HepG2 (cell line): ENCODE measurements at regions of chr17 and their contacts with region 1.

Region 1: GRCh38 chr17:79796763-79797491 is at the start of gene CBX8:
- DNase-seq: peak; percentile 99
- ATAC-seq: peak; percentile 69
- H3K4me3 ChIP-seq: peak within 1 kb of the TSS; percentile 85 to 94 (median 86)
- H3K27ac ChIP-seq: peak within 1 kb of the TSS; percentile 87
- H3K4me1 ChIP-seq: peaks cover 67% of the 10 kb centered on the region
- H3K27me3 ChIP-seq: peaks cover 28 to 49% of the 10 kb centered on the region in 2 experiments
- CTCF ChIP-seq: peak; percentile 72
- EP300 ChIP-seq: peak in 1 of 2 experiments; percentile 32; a peak in 2 of 4 replicates
- POLR2A ChIP-seq: peak; percentile 78 to 92
- RAD21 ChIP-seq: peak; percentile 74
- total RNA-seq, gene CBX8: 12.0 and 12.6 TPM in 2 replicates

Region 2: DNA sequence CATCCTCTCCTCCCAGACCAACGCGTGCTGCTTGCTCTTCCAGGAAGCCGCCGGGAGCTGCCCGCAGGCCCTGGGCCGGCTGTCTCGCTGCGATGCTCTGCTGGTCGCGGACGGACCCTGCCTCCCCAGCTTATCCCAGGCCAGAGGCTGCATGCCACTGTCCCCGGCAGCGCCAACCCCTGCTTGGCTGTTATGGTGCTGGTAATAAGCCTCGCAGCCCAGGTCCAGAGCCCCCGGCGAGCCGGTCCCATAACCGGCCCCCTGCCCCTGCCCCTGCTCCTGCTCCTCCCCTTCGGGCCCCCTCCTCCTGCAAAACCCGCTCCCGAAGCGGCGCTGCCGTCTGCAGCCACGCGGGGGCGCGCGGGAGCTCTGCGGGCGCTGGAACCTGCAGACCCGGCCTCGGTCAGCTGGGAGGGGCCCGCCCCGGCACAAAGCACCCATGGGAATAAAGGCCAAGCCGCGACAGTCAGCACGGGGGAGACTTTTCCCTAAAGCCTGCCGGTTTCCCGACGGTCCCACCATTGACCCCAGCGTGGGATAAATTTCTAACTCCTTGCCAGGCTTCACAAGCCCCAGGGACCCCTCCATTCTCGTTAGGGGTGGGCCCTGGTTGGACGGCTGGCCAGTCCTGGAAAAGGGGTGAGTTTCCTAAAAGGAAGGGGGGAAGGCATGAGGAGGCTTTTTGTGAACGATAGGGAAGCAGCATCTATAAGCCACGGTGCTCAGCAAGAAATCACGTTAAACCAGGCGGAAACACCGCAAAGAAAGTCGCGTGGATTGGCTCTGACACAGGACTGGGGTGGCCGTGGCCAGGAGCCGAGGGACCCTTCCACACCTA is 55.0 kb before region 1 on chr17:
- CTCF ChIA-PET with region 1: no interaction called
- POLR2A ChIA-PET with region 1: interaction called, 25 read pairs
- in situ Hi-C with region 1: no loop called
- intact Hi-C with region 1: loop called (anchors 5 kb)
- DNase-seq: peak; percentile 67
- ATAC-seq: peak; percentile 53
- H3K4me3 ChIP-seq: peak overlapping the region; percentile 53 to 75 (median 56)
- H3K27ac ChIP-seq: peak overlapping the region; percentile 38
- H3K4me1 ChIP-seq: peaks cover 93% of the 10 kb centered on the region
- H3K27me3 ChIP-seq: peaks cover 7 to 11% of the 10 kb centered on the region in 2 experiments; a peak in 4 of 5 replicates
- CTCF ChIP-seq: peak; percentile 98
- EP300 ChIP-seq: peak in 1 of 2 experiments; percentile 30; a peak in 1 of 4 replicates
- POLR2A ChIP-seq: no peak
- RAD21 ChIP-seq: peak; percentile 86

Region 3: GRCh38 chr17:79752175-79752574 is 44.8 kb before region 1 on chr17:
- CTCF ChIA-PET with region 1: no interaction called
- POLR2A ChIA-PET with region 1: no interaction called
- in situ Hi-C with region 1: no loop called
- intact Hi-C with region 1: no loop called
- DNase-seq: no peak
- ATAC-seq: no peak
- H3K4me3 ChIP-seq: no peak overlapping the region
- H3K27ac ChIP-seq: no peak overlapping the region
- H3K4me1 ChIP-seq: peaks cover 49% of the 10 kb centered on the region
- H3K27me3 ChIP-seq: peaks cover 8 to 34% of the 10 kb centered on the region in 2 experiments
- CTCF ChIP-seq: no peak
- EP300 ChIP-seq: no peak
- POLR2A ChIP-seq: no peak
- RAD21 ChIP-seq: no peak

Region 4: DNA sequence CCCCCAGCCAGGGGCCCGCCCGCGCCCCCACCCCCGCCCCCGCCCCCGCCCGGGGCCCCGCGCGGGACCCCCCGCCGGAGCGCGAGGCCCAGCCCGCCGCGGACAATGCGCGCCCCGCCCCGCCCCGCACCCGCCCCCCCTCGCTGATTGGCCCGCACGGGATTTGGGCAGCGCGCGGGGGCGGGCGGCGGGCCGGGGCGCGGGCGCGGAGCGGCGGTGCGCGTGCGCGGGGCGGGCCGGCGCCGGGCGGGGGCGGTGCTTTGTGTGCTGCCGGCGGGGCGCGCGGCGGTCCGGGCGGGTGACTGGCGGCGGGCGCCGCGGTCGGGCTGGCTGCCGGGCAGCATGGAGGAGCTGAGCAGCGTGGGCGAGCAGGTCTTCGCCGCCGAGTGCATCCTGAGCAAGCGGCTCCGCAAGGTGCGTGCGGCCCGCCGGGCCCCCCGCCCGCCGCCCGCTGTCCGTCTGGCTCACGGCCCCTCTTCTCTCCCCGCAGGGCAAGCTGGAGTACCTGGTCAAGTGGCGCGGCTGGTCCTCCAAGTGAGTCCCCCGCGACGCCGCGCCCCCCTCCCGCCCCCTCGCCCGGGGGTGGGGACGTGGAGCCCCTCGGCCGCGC is 18.9 kb before region 1 on chr17 and contains the start of gene CBX2:
- CTCF ChIA-PET with region 1: no interaction called
- POLR2A ChIA-PET with region 1: interaction called, 10 read pairs
- in situ Hi-C with region 1: no loop called
- intact Hi-C with region 1: no loop called
- DNase-seq: peak; percentile 43
- ATAC-seq: peak; percentile 60
- H3K4me3 ChIP-seq: peak within 1 kb of the TSS; percentile 76 to 86 (median 84)
- H3K27ac ChIP-seq: peak within 1 kb of the TSS; percentile 69
- H3K4me1 ChIP-seq: peaks cover 78% of the 10 kb centered on the region
- H3K27me3 ChIP-seq: peaks cover 0 to 7% of the 10 kb centered on the region in 2 experiments; a peak in 2 of 5 replicates
- CTCF ChIP-seq: no peak; the same call in 1 of the 2 replicates
- EP300 ChIP-seq: no peak
- POLR2A ChIP-seq: peak; percentile 53 to 84
- RAD21 ChIP-seq: 0 out of 2 replicates have a peak, but pooled peaks have one; percentile 35
- total RNA-seq, gene CBX2: 13.0 and 14.5 TPM in 2 replicates

Region 5: DNA sequence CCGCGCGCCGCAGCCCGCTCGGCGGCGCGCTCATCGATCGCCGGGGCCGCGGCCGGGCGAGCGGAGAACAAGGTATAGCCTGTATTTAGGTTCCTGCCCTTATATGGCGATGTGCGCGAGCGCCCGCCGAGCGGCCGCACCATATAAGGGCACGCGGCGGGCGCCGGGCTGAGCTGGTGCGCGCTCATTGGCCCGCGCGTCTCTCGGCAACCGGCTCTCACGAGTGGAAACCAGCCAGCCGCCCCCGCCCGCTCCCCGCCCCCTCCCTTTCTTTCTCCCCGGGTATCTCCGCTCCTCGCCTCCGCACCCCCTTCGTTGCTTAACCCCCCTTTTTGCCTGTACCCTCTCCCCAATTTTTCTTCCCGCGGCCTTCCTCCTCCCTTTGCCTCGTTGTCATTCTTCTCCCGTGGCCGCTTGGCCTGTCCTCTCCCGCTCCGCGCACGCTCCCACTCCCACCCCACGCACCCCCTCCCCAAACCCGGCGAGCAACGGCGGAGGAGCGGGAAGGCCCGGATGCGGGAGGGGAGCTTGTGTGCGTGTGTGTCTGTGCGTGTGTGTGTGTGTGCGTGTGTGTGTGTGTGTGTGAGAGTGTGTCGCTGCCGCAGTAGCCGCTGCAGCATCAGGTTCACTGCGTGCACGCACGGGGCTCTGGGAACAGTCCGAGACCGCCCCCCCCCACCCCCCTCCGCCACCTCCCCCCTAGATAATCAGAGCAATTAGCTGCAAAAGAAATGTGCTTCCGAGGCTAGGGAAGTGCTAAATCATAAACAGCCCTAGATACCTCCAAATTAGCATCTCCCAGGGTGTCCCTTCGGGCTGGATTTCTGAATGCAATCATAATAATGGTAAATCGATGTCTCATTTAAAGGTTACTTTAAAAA is 13.4 kb after region 1 on chr17:
- CTCF ChIA-PET with region 1: no interaction called
- POLR2A ChIA-PET with region 1: interaction called, 62 read pairs
- in situ Hi-C with region 1: no loop called
- intact Hi-C with region 1: no loop called
- DNase-seq: peak; percentile 83
- ATAC-seq: peak; percentile 77
- H3K4me3 ChIP-seq: peak overlapping the region in 2 of 3 experiments; percentile 38 to 62; a peak in 3 of 6 replicates
- H3K27ac ChIP-seq: no peak overlapping the region
- H3K4me1 ChIP-seq: peaks cover 49% of the 10 kb centered on the region
- H3K27me3 ChIP-seq: peaks cover 25 to 68% of the 10 kb centered on the region in 2 experiments
- CTCF ChIP-seq: no peak
- EP300 ChIP-seq: no peak
- POLR2A ChIP-seq: no peak
- RAD21 ChIP-seq: peak; percentile 27; the same call in 1 of the 2 replicates

Region 6: DNA sequence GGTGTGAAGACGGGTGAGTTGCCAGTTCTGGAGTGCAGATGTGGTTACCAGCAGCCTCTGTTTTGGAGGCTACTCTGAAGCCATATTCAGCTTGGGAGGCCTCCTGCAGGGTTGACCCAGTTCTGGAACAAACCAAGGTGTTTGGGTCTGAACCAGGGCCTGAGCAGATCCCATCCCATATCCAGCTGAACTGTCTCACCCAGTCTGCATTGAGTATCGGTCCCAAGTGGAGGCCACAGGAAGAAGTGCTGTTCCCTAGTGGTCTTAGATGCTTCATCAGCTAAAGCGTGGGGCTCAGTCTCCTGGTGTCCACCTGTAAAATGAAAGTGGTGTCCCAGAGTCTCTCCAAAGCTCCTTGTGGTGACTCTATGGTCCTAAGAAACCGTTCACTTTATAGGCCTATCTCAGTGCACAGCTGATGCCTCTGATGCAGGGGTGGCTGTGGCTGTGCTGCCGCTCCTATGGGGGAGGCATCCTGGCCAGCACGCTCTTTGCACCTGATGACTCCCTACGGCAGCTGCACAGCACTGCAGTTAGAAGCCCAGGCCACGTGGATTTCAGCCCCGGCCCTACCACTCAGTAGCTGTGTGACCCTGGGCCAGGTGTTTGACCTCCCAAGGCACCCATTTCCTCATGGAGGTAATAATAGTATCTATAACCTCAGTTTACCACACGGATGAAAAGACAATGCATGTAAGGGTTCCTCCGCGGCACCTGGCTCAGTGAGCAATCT is 21.3 kb after region 1 on chr17:
- CTCF ChIA-PET with region 1: no interaction called
- POLR2A ChIA-PET with region 1: interaction called, 62 read pairs
- in situ Hi-C with region 1: no loop called
- intact Hi-C with region 1: no loop called
- DNase-seq: no peak
- ATAC-seq: peak; percentile 66
- H3K4me3 ChIP-seq: no peak overlapping the region; a peak in 1 of 6 replicates
- H3K27ac ChIP-seq: no peak overlapping the region
- H3K4me1 ChIP-seq: peaks cover 58% of the 10 kb centered on the region
- H3K27me3 ChIP-seq: peaks cover 3 to 33% of the 10 kb centered on the region in 2 experiments; a peak in 4 of 5 replicates
- CTCF ChIP-seq: peak; percentile 53
- EP300 ChIP-seq: no peak
- POLR2A ChIP-seq: no peak
- RAD21 ChIP-seq: peak; percentile 44; the same call in 1 of the 2 replicates

Region 7: DNA sequence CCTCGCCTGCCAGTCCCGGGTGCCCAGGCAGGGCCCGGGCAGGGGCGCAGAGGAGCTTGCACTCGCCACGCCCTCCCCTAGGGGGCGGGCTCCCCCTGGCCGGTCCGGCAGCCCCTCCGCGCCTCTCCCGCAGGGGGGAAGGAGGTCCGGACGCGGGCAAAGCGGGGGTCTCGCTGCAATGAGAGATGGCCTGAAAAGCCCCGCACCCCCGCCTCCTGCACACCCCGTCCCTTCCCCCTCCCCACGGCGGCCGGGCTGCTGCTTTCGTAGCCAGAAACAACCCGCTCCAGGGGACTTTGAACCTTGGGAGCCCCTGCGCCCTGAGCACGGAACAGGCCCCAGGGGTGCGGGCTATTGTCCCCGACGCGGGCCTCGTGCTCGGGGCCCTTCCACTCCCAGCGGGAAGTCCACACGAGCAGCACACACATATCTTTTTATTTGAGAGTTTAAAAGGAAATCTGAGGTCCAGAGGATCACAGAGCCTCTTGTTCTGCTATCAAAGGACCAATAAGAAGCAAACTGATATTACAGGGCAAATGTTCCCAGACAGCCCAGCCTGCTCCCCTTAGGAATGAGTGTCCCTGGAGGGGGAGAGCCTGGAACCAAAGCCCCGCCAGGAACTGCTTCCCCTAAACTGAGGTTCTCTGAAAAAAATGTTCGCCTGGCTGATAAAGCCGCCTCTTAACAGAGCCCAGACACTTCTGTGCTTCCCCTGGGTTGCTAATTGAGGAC is 48.1 kb after region 1 on chr17:
- CTCF ChIA-PET with region 1: no interaction called
- POLR2A ChIA-PET with region 1: interaction called, 40 read pairs
- in situ Hi-C with region 1: no loop called
- intact Hi-C with region 1: no loop called
- DNase-seq: peak; percentile 74
- ATAC-seq: peak; percentile 73
- H3K4me3 ChIP-seq: peak overlapping the region; percentile 63 to 87 (median 77)
- H3K27ac ChIP-seq: peak overlapping the region; percentile 85
- H3K4me1 ChIP-seq: peaks cover 86% of the 10 kb centered on the region
- H3K27me3 ChIP-seq: no peaks in the 10 kb centered on the region
- CTCF ChIP-seq: peak; percentile 84
- EP300 ChIP-seq: peak; percentile 24 to 69; a peak in 3 of 4 replicates
- POLR2A ChIP-seq: no peak
- RAD21 ChIP-seq: peak; percentile 51

Region 8: DNA sequence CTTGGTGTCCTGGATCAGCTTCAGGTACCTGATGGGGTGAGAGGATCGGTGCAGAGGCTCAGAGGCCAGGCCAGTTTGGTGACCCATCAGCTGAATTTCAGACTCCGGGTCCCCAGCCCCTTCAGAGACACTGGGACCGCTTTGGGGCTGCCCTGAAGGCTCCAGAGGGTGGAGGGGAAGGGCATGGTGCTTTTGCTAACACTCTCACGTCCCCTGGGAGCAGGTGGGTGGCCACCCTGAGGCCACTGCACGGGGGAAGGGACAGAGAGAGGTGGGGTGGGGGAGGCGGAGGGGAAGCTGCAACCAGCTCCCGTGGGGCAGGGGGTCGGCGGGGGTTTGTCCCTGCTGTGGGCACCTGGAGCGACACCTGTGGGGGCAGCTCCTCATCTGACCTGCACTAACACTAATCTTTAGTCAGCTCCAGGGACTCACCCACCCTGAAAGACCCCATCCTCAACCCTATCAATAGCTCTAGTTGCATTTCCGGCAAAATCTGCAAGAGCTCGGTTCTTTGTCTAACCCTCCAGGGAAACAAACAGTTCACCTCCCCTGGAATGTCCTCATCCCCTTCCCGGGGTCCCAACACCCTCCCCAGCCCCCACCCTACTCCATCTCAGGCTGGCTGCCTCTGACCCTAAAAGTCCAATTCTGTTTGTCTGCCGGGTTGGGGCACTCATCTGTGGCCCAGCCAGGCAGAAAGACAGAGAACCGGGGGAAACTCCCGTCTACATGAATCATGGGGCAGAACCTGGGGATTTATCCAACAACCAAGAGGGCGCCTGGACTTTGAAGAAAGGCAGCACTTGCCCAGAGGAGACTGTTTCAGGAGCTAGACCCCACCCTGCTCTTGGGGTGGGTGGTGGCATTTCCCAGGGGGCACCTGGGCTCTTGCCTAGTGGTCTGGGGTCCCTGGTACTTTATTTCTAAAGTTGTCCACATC is 134.2 kb after region 1 on chr17:
- CTCF ChIA-PET with region 1: no interaction called
- POLR2A ChIA-PET with region 1: interaction called, 10 read pairs
- in situ Hi-C with region 1: no loop called
- intact Hi-C with region 1: no loop called
- DNase-seq: no peak
- ATAC-seq: peak; percentile 0; the same call in 2 of the 3 replicates
- H3K4me3 ChIP-seq: peak overlapping the region; percentile 4 to 48 (median 45); a peak in 5 of 6 replicates
- H3K27ac ChIP-seq: peak overlapping the region; percentile 24
- H3K4me1 ChIP-seq: peaks cover 93% of the 10 kb centered on the region
- H3K27me3 ChIP-seq: no peaks in the 10 kb centered on the region
- CTCF ChIP-seq: no peak
- EP300 ChIP-seq: no peak
- POLR2A ChIP-seq: no peak
- RAD21 ChIP-seq: no peak